Heart left ventricle (tissue), 16 donors: ENCODE measurements at regions of chr22 and their contacts with region 1.

Region 1: DNA sequence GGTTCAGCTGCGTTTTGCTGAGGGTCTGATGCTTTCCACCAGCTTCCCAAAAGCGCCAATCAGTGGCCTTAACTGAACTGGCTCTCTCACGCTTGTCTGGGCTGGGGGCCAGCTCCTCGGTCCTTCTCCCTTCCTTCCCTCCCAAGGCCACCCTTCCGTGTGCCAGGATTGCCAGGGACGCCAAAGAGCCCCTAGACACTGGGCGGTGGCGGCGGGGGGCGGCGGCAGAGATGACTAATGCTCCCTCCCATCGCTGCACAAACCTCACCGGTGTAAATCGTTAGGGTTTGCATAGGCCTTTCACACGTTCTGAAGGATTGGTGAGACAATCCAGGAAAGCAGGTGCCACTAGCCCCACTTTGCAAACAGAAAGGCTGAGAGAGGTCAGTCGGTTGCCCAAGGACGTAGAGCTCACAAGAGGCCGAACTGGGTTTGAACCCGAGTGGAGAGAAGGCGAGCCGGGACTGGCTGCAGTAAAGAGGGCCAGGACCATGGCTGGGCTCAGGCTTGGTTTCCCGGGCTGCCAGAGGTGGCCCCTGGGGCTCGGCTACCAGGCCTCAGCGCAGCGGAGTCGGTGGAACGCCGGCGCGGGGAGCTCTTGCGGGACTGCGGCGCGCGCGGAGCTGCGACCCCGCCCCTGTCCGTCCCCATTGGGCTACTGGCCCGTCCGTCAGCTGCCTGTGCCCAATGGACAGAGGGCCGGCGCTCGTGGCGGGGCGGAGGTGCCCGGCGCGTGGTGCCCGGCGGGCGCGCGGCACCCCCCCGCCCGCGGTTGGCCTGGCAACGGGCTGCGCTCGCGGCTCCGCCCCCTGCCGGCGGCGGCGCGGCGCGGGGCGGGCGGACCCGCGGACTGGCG is 589 bp upstream of the GNAZ start:
- DNase-seq: peak; percentile 92 to 96 (median 94)
- ATAC-seq: peak; percentile 83 to 99 (median 97)
- H3K4me3 ChIP-seq: peak overlapping the region; percentile 34 to 79 (median 63)
- H3K27ac ChIP-seq: peak overlapping the region in 6 of 12 donors; percentile 20 to 66 (median 53)
- H3K4me1 ChIP-seq: peaks cover 0 to 31% (median 13%) of the 10 kb centered on the region in 12 donors
- H3K27me3 ChIP-seq: peaks cover 0 to 11% (median 0%) of the 10 kb centered on the region in 9 donors
- CTCF ChIP-seq: no peak
- POLR2A ChIP-seq: no peak

Region 2: GRCh38 chr22:22728382-22728781 is 341.3 kb before region 1 on chr22:
- intact Hi-C with region 1: no loop called
- DNase-seq: no peak
- ATAC-seq: no peak
- H3K4me3 ChIP-seq: no peak overlapping the region
- H3K27ac ChIP-seq: no peak overlapping the region
- H3K4me1 ChIP-seq: no peaks in the 10 kb centered on the region
- H3K27me3 ChIP-seq: peaks cover 0 to 12% (median 0%) of the 10 kb centered on the region in 9 donors
- CTCF ChIP-seq: no peak
- POLR2A ChIP-seq: no peak

Region 3: GRCh38 chr22:23047265-23047664 is 22.5 kb before region 1 on chr22:
- intact Hi-C with region 1: loop called in 1 of 10 experiments (anchors 2 kb)
- DNase-seq: peak in 2 of 5 donors; percentile 43 to 55
- ATAC-seq: peak in 3 of 4 donors; percentile 59 to 97 (median 67)
- H3K4me3 ChIP-seq: no peak overlapping the region
- H3K27ac ChIP-seq: peak overlapping the region in 9 of 12 donors; percentile 31 to 67 (median 58)
- H3K4me1 ChIP-seq: peaks cover 0 to 18% (median 0%) of the 10 kb centered on the region in 12 donors
- H3K27me3 ChIP-seq: peaks cover 0 to 6% (median 0%) of the 10 kb centered on the region in 9 donors
- CTCF ChIP-seq: no peak
- POLR2A ChIP-seq: no peak

Region 4: DNA sequence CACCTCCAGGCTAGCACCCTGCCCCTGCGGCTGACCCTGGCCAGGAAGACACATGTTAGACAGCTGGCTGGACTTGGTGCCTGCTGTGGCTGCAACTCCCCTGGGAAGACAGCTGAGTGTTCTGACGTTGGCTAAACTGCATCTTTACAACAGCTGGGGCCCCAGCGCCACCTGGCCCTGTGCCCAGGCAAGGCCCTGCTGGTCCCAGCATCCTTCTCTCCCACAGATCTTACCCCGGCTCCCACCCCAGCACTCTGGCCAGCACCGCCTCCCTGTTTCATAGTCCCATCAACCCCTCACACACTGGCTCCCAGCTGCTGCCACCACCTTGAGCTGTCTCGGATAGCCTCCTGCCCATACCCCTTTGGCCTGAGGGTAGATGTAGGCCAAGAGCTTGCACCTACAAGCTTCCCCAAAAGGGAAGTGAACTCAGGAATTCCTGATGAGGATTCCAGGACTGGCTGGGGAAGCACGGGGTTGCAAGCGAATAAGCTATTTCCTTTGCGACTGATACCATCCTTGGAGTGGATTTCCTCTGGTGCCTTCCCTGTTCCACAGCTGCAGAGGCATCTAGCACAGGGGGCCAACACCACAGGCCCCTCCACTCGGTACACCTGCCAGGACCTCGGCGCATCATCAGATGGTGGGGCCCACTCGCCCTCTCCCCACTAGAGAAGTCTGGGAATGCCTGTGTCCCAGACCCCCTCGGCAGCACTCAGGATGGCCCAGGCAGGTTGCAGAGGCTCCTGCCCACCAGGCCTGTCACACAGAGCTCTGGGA is 43.5 kb after region 1 on chr22:
- intact Hi-C with region 1: loop called in 1 of 10 experiments (anchors 10 kb)
- DNase-seq: peak in 3 of 5 donors; percentile 30 to 52 (median 34)
- ATAC-seq: peak in 2 of 4 donors; percentile 33 to 47
- H3K4me3 ChIP-seq: no peak overlapping the region
- H3K27ac ChIP-seq: no peak overlapping the region
- H3K4me1 ChIP-seq: peaks cover 0 to 21% (median 11%) of the 10 kb centered on the region in 12 donors
- H3K27me3 ChIP-seq: no peaks in the 10 kb centered on the region
- CTCF ChIP-seq: no peak
- POLR2A ChIP-seq: no peak

Region 5: DNA sequence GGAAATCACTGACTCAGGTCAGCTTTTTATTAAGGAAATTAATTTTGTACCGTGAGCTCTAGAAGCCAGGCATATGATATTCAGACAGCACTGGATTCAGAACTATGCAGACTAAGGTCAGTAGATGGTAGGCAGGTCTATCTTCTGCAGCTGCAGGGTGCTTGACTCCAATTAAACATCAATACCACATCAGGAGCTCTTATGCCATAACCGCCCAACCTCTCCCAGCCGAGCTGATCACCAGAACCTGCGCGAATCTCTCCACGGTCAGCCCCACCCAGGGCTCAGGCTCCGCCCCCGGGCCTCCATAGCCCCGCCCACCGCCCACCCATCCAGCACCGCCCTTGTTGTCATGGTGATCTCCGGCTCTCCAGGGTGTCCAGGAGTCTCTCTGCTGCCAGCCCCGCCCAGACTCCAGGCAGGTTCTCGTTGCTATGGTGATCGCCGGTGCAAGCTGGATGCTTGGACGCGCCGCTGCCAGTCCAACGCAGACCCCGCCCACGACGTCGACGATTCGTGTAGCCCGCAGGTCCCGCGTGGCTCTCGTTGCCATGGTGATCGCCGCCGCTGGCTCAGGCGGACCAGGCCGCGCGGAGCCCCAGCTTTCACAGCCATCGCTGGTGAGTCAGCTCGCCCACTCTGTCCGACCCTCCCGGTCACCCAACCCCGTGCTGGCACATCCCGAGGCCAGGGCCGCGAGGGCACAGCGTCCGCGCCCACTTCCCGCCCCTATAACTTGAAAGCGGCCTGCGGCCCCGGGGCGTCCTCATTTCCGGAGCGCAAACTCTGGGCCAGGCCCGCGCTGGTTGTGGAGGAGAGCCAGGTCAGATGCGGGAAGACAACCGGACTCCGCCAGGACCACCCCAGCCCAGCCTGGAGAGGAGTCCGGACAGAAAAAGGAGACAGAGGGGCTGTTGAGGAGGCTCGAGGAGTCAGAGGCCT is 75.5 kb after region 1 on chr22 and contains the start of gene RAB36:
- intact Hi-C with region 1: no loop called
- DNase-seq: peak; percentile 94 to 97 (median 97)
- ATAC-seq: peak; percentile 57 to 84 (median 82)
- H3K4me3 ChIP-seq: peak within 1 kb of the TSS; percentile 14 to 62 (median 50)
- H3K27ac ChIP-seq: peak within 1 kb of the TSS in 9 of 12 donors; percentile 38 to 81 (median 61)
- H3K4me1 ChIP-seq: peaks cover 0 to 39% (median 24%) of the 10 kb centered on the region in 12 donors
- H3K27me3 ChIP-seq: peaks cover 0 to 13% (median 0%) of the 10 kb centered on the region in 9 donors
- CTCF ChIP-seq: no peak
- POLR2A ChIP-seq: no peak
- total RNA-seq, gene RAB36: 0.25 to 3.2 (median 0.54) TPM